ENCODE measurements at regions of chr3 and their contacts with region 1.

Region 1: GRCh38 chr3:16665282-16665741 is 60.1 kb upstream of the DAZL start:
- DNase-seq: peak; percentile 84
- ATAC-seq: peak; percentile 85
- H3K4me3 ChIP-seq: no peak overlapping the region; the same call in 1 of the 2 replicates
- H3K27ac ChIP-seq: 0 out of 2 replicates have a peak overlapping the region, but pooled peaks have one; percentile 3
- H3K4me1 ChIP-seq: peaks cover 11% of the 10 kb centered on the region
- H3K27me3 ChIP-seq: no peaks in the 10 kb centered on the region
- CTCF ChIP-seq: no peak

Region 2: GRCh38 chr3:16897254-16897926 is 232.1 kb after region 1 on chr3:
- CTCF ChIA-PET with region 1: no interaction called
- POLR2A ChIA-PET with region 1: no interaction called
- intact Hi-C with region 1: loop called (anchors 2 kb)
- DNase-seq: peak; percentile 94
- ATAC-seq: peak; percentile 86
- H3K4me3 ChIP-seq: peak overlapping the region; percentile 52
- H3K27ac ChIP-seq: peak overlapping the region; percentile 85
- H3K4me1 ChIP-seq: peaks cover 25% of the 10 kb centered on the region
- H3K27me3 ChIP-seq: no peaks in the 10 kb centered on the region
- CTCF ChIP-seq: no peak

Measured in PC-3 (cell line).